OCI-LY7 (cell line): ENCODE measurements at regions of chr17 and their contacts with region 1.

Region 1: DNA sequence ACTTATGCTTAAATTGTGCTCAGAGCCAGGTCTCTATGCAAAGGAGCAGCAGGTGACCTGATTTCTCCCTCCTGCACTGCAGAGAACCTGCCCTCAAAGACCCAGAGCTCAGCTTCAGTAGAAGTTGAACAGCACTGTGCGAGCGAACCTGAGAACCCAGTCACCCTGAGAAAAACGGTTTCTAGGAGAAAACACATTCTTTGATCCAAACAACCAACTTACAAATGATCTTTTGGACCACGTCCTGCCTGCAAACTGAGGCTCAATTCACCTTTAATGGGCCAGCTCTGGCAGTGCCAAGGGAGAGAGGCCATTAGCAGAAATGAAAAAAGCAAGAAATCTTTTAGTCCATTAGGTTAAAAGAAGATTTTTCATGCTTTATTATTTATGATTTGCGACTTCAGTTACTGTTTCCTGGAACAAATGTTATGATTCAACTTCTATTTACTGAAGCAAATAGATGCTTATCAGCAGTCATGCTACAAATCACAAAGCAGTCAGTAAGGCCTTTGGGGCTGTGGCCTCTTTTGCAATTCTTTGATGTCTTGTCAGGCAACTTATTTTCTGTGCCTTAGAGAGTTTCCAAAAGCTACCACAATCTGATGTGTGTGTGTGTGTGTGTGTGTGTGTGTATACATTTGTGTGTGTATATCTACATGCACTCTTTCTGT is 65.7 kb upstream of the LRRC37A3 start:
- DNase-seq: peak; percentile 61
- H3K4me3 ChIP-seq: peak overlapping the region; percentile 41
- H3K27ac ChIP-seq: peak overlapping the region; percentile 95
- H3K4me1 ChIP-seq: peaks cover 89% of the 10 kb centered on the region
- CTCF ChIP-seq: no peak

Region 2: GRCh38 chr17:64938925-64939474 is 46.0 kb before region 1 on chr17:
- CTCF ChIA-PET with region 1: no interaction called
- POLR2A ChIA-PET with region 1: no interaction called
- intact Hi-C with region 1: no loop called
- DNase-seq: peak; percentile 50
- H3K4me3 ChIP-seq: no peak overlapping the region
- H3K27ac ChIP-seq: no peak overlapping the region
- H3K4me1 ChIP-seq: no peaks in the 10 kb centered on the region
- CTCF ChIP-seq: peak; percentile 78

Region 3: DNA sequence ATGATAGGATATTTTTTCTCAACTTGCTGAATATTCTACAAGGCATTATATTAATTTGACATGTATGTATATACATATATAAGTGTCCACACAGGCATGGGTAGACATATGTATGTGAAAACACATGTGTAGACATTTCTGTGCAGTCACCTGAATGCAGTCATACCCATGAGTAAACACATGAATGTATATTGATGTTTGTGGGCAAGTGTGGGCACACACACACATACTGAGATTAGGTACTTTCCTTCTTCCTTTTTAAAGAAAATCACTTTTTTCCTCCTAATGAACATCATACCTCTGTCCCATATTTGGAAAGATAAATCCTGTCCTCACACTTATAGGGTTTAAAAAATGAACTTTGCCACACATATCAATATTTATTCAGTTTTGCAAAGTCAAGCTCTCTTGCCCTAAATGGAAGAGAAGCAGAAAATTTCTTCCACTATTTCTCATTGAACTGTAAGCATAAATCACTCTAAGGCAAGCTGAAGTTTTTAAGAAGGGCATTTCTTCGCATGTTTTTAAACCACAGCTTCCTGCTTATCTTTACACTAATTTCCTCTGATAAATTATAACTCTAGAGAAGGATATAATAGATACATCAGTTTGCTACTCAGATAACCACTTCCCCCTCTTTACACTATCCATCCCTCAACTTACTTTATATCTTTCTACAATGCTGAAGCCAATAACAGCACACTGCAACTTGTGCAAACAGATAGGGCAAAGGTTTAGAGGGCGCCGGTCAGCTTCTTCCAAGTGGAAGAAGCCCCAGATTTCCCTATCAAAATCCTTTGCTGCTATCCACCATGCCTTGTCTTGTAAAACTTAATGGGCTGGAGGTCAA is 16.1 kb before region 1 on chr17:
- CTCF ChIA-PET with region 1: no interaction called
- POLR2A ChIA-PET with region 1: interaction called, 44 read pairs
- intact Hi-C with region 1: loop called (anchors 2 kb)
- DNase-seq: no peak
- H3K4me3 ChIP-seq: peak overlapping the region; percentile 18
- H3K27ac ChIP-seq: peak overlapping the region; percentile 99
- H3K4me1 ChIP-seq: peaks cover 98% of the 10 kb centered on the region
- CTCF ChIP-seq: no peak

Region 4: DNA sequence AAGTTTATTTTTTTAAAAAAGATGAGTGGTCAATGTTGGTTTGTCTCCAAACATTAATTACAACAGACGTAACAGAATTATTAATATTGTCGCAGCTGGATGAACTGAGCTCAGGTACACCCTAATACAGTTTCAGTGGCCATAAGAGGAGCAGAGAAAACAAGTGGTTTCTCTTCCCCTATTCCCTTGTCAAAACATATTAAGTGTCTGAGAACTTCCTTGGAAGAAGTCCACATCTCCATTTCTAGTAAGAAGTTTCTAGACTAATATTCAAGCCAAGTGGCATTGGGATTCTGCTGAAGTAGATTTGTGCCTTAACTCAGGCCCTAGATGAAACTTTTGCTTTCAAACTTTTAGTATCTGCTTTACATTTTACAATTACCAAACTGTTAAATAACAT is 23.9 kb after region 1 on chr17:
- CTCF ChIA-PET with region 1: no interaction called
- POLR2A ChIA-PET with region 1: no interaction called
- intact Hi-C with region 1: no loop called
- DNase-seq: no peak
- H3K4me3 ChIP-seq: no peak overlapping the region
- H3K27ac ChIP-seq: peak overlapping the region; percentile 37
- H3K4me1 ChIP-seq: peaks cover 85% of the 10 kb centered on the region
- CTCF ChIP-seq: no peak

Region 5: GRCh38 chr17:65027305-65027704 is 42.3 kb after region 1 on chr17:
- CTCF ChIA-PET with region 1: interaction called, 4 read pairs
- POLR2A ChIA-PET with region 1: interaction called, 10 read pairs
- intact Hi-C with region 1: no loop called
- DNase-seq: no peak
- H3K4me3 ChIP-seq: no peak overlapping the region
- H3K27ac ChIP-seq: peak overlapping the region; percentile 18
- H3K4me1 ChIP-seq: peaks cover 88% of the 10 kb centered on the region
- CTCF ChIP-seq: peak; percentile 69

Region 6: GRCh38 chr17:65047942-65048341 is 63.0 kb after region 1 on chr17:
- CTCF ChIA-PET with region 1: interaction called, 4 read pairs
- POLR2A ChIA-PET with region 1: interaction called, 12 read pairs
- intact Hi-C with region 1: loop called (anchors 2 kb)
- DNase-seq: no peak
- H3K4me3 ChIP-seq: peak overlapping the region; percentile 19
- H3K27ac ChIP-seq: peak overlapping the region; percentile 44
- H3K4me1 ChIP-seq: peaks cover 99% of the 10 kb centered on the region
- CTCF ChIP-seq: no peak

Region 7: GRCh38 chr17:65085397-65085796 is 100.4 kb after region 1 on chr17:
- CTCF ChIA-PET with region 1: no interaction called
- POLR2A ChIA-PET with region 1: no interaction called
- intact Hi-C with region 1: no loop called
- DNase-seq: peak; percentile 42
- H3K4me3 ChIP-seq: no peak overlapping the region
- H3K27ac ChIP-seq: no peak overlapping the region
- H3K4me1 ChIP-seq: peaks cover 5% of the 10 kb centered on the region
- CTCF ChIP-seq: peak; percentile 46; the same call in 1 of the 2 replicates

Region 8: GRCh38 chr17:65100316-65101140 is 115.5 kb after region 1 on chr17:
- CTCF ChIA-PET with region 1: interaction called, 3 read pairs
- POLR2A ChIA-PET with region 1: interaction called, 3 read pairs
- intact Hi-C with region 1: loop called (anchors 1 kb)
- DNase-seq: peak; percentile 91
- H3K4me3 ChIP-seq: peak overlapping the region; percentile 73
- H3K27ac ChIP-seq: peak overlapping the region; percentile 81
- H3K4me1 ChIP-seq: peaks cover 41% of the 10 kb centered on the region
- CTCF ChIP-seq: peak; percentile 91